CD8-positive, alpha-beta T cell (primary cell): ENCODE measurements at regions of chr3 and their contacts with region 1.

Region 1: DNA sequence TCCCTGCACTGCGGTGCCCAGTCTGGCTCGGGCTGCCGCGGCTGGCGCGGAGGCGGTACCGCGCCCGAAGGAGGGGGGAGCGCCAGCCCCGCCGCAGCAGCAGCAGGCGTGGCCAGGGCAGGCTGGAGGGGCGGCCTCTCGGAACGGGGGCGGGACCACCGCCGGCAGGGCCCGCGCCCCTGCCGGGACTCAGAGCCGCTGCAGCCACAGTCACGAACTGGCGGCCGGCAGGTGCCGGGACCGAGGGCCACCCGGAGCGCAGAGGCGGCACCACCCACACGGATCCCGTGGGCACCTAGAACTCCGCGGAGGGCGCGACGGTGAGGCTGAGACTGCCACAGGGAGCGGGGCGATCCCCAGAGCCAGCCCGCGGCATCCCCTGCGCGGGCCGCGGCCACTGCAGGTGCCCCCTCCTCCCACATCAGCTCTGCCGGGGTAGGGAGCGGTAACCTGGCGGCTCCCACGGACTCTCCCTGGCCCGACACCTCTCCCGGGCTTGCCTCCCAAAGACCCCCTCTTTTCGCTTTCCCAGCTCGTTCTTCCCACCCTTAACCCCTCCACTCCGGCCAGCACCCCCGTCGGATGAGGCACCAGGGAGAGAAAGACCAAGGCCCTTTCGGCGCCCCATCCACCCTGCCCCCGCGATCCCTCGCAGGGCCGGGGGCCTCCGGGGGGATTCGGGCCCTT is at the start of gene VWA5B2:
- DNase-seq: peak; percentile 54 to 89 (median 75)
- ATAC-seq: peak; percentile 97
- H3K4me3 ChIP-seq: peak within 1 kb of the TSS; percentile 52 to 80
- H3K4me3 Mint-ChIP-seq: peak within 1 kb of the TSS; percentile 76
- H3K27ac ChIP-seq: no peak within 1 kb of the TSS
- H3K27ac Mint-ChIP-seq: no peak within 1 kb of the TSS
- H3K4me1 ChIP-seq: peaks cover 14% of the 10 kb centered on the region
- H3K4me1 Mint-ChIP-seq: peaks cover 14% of the 10 kb centered on the region
- H3K27me3 ChIP-seq: peaks cover 21 to 31% of the 10 kb centered on the region in 2 experiments
- H3K27me3 Mint-ChIP-seq: peaks cover 49% of the 10 kb centered on the region
- CTCF ChIP-seq: peak; percentile 35
- total RNA-seq, gene VWA5B2: 0.28 to 0.65 TPM

Region 2: GRCh38 chr3:184218814-184219213 is 10.7 kb before region 1 on chr3:
- CTCF ChIA-PET with region 1: interaction called, 24 read pairs
- POLR2A ChIA-PET with region 1: no interaction called
- intact Hi-C with region 1: no loop called
- DNase-seq: no peak
- ATAC-seq: no peak
- H3K4me3 ChIP-seq: no peak overlapping the region
- H3K4me3 Mint-ChIP-seq: no peak overlapping the region
- H3K27ac ChIP-seq: no peak overlapping the region
- H3K27ac Mint-ChIP-seq: no peak overlapping the region
- H3K4me1 ChIP-seq: no peaks in the 10 kb centered on the region
- H3K4me1 Mint-ChIP-seq: no peaks in the 10 kb centered on the region
- H3K27me3 ChIP-seq: peaks cover 0 to 5% of the 10 kb centered on the region in 2 experiments
- H3K27me3 Mint-ChIP-seq: peaks cover 24% of the 10 kb centered on the region
- CTCF ChIP-seq: no peak

Region 3: GRCh38 chr3:184259878-184260723 is 30.6 kb after region 1 on chr3:
- CTCF ChIA-PET with region 1: interaction called, 13 read pairs
- POLR2A ChIA-PET with region 1: interaction called, 3 read pairs
- intact Hi-C with region 1: no loop called
- DNase-seq: peak in 7 of 9 experiments; percentile 10 to 69 (median 34)
- ATAC-seq: peak; percentile 69
- H3K4me3 ChIP-seq: peak overlapping the region; percentile 32 to 39
- H3K4me3 Mint-ChIP-seq: peak overlapping the region; percentile 78
- H3K27ac ChIP-seq: no peak overlapping the region
- H3K27ac Mint-ChIP-seq: peak overlapping the region; percentile 37
- H3K4me1 ChIP-seq: peaks cover 25% of the 10 kb centered on the region
- H3K4me1 Mint-ChIP-seq: peaks cover 20% of the 10 kb centered on the region
- H3K27me3 ChIP-seq: peaks cover 10 to 27% of the 10 kb centered on the region in 2 experiments
- H3K27me3 Mint-ChIP-seq: peaks cover 23% of the 10 kb centered on the region
- CTCF ChIP-seq: no peak

Region 4: GRCh38 chr3:184289426-184289938 is 59.9 kb after region 1 on chr3:
- CTCF ChIA-PET with region 1: interaction called, 23 read pairs
- POLR2A ChIA-PET with region 1: no interaction called
- intact Hi-C with region 1: loop called (anchors 1 kb)
- DNase-seq: peak; percentile 21 to 73 (median 57)
- ATAC-seq: peak; percentile 67
- H3K4me3 ChIP-seq: no peak overlapping the region
- H3K4me3 Mint-ChIP-seq: no peak overlapping the region
- H3K27ac ChIP-seq: no peak overlapping the region
- H3K27ac Mint-ChIP-seq: no peak overlapping the region
- H3K4me1 ChIP-seq: no peaks in the 10 kb centered on the region
- H3K4me1 Mint-ChIP-seq: no peaks in the 10 kb centered on the region
- H3K27me3 ChIP-seq: no peaks in the 10 kb centered on the region
- H3K27me3 Mint-ChIP-seq: peaks cover 13% of the 10 kb centered on the region
- CTCF ChIP-seq: peak; percentile 40

Region 5: DNA sequence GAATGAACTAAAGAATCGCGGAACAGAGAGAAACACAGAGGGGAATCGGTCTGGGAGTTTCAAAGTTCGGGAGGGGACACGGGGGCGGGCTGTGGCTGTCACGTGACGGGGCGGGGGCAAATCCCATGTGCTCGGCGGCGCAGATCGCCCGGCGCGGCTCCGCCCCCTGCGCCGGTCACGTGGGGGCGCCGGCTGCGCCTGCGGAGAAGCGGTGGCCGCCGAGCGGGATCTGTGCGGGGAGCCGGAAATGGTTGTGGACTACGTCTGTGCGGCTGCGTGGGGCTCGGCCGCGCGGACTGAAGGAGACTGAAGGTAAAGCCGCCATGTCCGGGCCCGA is 84.8 kb after region 1 on chr3 and contains the start of gene EIF4G1:
- CTCF ChIA-PET with region 1: no interaction called
- POLR2A ChIA-PET with region 1: no interaction called
- intact Hi-C with region 1: no loop called
- DNase-seq: peak; percentile 83 to 98 (median 92)
- ATAC-seq: peak; percentile 78
- H3K4me3 ChIP-seq: peak within 1 kb of the TSS; percentile 60 to 64
- H3K4me3 Mint-ChIP-seq: peak within 1 kb of the TSS; percentile 87
- H3K27ac ChIP-seq: peak within 1 kb of the TSS; percentile 80 to 93
- H3K27ac Mint-ChIP-seq: peak within 1 kb of the TSS; percentile 94
- H3K4me1 ChIP-seq: peaks cover 23% of the 10 kb centered on the region
- H3K4me1 Mint-ChIP-seq: peaks cover 33% of the 10 kb centered on the region
- H3K27me3 ChIP-seq: no peaks in the 10 kb centered on the region
- H3K27me3 Mint-ChIP-seq: no peaks in the 10 kb centered on the region
- CTCF ChIP-seq: no peak
- total RNA-seq, gene EIF4G1: 220 to 235 TPM